CD8-positive, alpha-beta T cell (primary cell): ENCODE measurements at regions of chr16 and their contacts with region 1.

Region 1: GRCh38 chr16:30370444-30371247 is at the start of gene TBC1D10B:
- DNase-seq: peak; percentile 98 to 100 (median 99)
- ATAC-seq: peak; percentile 84
- H3K4me3 ChIP-seq: peak within 1 kb of the TSS; percentile 79 to 83
- H3K4me3 Mint-ChIP-seq: peak within 1 kb of the TSS; percentile 89
- H3K27ac ChIP-seq: peak within 1 kb of the TSS; percentile 36 to 84
- H3K27ac Mint-ChIP-seq: peak within 1 kb of the TSS; percentile 87
- H3K4me1 ChIP-seq: peaks cover 42% of the 10 kb centered on the region
- H3K4me1 Mint-ChIP-seq: peaks cover 54% of the 10 kb centered on the region
- H3K27me3 ChIP-seq: no peaks in the 10 kb centered on the region
- H3K27me3 Mint-ChIP-seq: no peaks in the 10 kb centered on the region
- CTCF ChIP-seq: no peak
- total RNA-seq, gene TBC1D10B: 12.3 to 13.8 TPM

Region 2: GRCh38 chr16:29862884-29863668 is 507.6 kb before region 1 on chr16 and contains the start of gene CDIPT:
- CTCF ChIA-PET with region 1: no interaction called
- POLR2A ChIA-PET with region 1: no interaction called
- intact Hi-C with region 1: no loop called
- DNase-seq: peak; percentile 87 to 98 (median 93)
- ATAC-seq: peak; percentile 97
- H3K4me3 ChIP-seq: peak within 1 kb of the TSS; percentile 81 to 96
- H3K4me3 Mint-ChIP-seq: peak within 1 kb of the TSS; percentile 94
- H3K27ac ChIP-seq: peak within 1 kb of the TSS; percentile 90 to 99
- H3K27ac Mint-ChIP-seq: peak within 1 kb of the TSS; percentile 100
- H3K4me1 ChIP-seq: peaks cover 19% of the 10 kb centered on the region
- H3K4me1 Mint-ChIP-seq: peaks cover 28% of the 10 kb centered on the region
- H3K27me3 ChIP-seq: no peaks in the 10 kb centered on the region
- H3K27me3 Mint-ChIP-seq: no peaks in the 10 kb centered on the region
- CTCF ChIP-seq: peak; percentile 42
- total RNA-seq, gene CDIPT: 24.5 to 26.4 TPM

Region 3: DNA sequence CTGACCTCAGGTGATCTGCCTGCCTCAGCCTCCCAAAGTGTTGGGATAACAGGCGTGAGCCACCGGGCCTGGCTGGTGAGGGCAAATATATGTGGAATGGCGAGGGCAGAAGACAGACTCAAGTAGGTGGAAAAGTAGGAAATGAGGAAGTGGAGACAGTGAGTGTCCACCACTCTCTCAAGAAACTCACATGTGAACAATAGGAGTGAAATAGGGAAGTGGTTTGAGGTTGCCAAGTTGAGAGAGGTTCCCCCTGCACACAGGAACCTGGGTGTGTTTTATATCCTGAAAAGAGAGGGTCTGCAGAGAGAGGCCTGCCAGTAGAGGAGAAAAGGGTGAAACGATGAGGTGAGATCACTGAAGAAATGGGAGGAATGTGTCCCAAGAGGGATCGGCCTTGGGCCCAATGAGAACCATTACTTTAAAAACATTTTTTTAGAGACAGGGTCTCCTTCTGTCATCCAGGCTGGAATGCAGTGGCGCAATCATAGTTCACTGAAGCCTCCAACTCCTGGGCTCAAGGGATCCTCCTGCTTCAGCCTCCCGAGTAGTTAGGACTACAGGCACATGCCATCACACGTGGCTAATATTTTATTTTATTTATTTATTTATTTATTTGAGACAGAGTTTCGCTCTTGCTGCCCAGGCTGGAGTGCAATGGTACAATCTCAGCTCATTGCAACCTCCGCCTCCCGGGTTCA is 204.3 kb before region 1 on chr16:
- CTCF ChIA-PET with region 1: no interaction called
- POLR2A ChIA-PET with region 1: no interaction called
- intact Hi-C with region 1: no loop called
- DNase-seq: peak in 3 of 9 experiments; percentile 25 to 59 (median 51)
- ATAC-seq: peak; percentile 48
- H3K4me3 ChIP-seq: no peak overlapping the region
- H3K4me3 Mint-ChIP-seq: peak overlapping the region; percentile 66
- H3K27ac ChIP-seq: peak overlapping the region in 1 of 2 experiments; percentile 49
- H3K27ac Mint-ChIP-seq: peak overlapping the region; percentile 74
- H3K4me1 ChIP-seq: peaks cover 30% of the 10 kb centered on the region
- H3K4me1 Mint-ChIP-seq: peaks cover 32% of the 10 kb centered on the region
- H3K27me3 ChIP-seq: no peaks in the 10 kb centered on the region
- H3K27me3 Mint-ChIP-seq: no peaks in the 10 kb centered on the region
- CTCF ChIP-seq: no peak

Region 4: GRCh38 chr16:30335598-30336474 is 34.8 kb before region 1 on chr16:
- CTCF ChIA-PET with region 1: no interaction called
- POLR2A ChIA-PET with region 1: interaction called, 8 read pairs
- intact Hi-C with region 1: loop called (anchors 1 kb)
- DNase-seq: peak in 4 of 9 experiments; percentile 32 to 72 (median 60)
- ATAC-seq: peak; percentile 2
- H3K4me3 ChIP-seq: peak overlapping the region; percentile 38 to 51
- H3K4me3 Mint-ChIP-seq: peak overlapping the region; percentile 86
- H3K27ac ChIP-seq: peak overlapping the region; percentile 50 to 52
- H3K27ac Mint-ChIP-seq: peak overlapping the region; percentile 86
- H3K4me1 ChIP-seq: peaks cover 10% of the 10 kb centered on the region
- H3K4me1 Mint-ChIP-seq: peaks cover 32% of the 10 kb centered on the region
- H3K27me3 ChIP-seq: no peaks in the 10 kb centered on the region
- H3K27me3 Mint-ChIP-seq: no peaks in the 10 kb centered on the region
- CTCF ChIP-seq: no peak

Region 5: DNA sequence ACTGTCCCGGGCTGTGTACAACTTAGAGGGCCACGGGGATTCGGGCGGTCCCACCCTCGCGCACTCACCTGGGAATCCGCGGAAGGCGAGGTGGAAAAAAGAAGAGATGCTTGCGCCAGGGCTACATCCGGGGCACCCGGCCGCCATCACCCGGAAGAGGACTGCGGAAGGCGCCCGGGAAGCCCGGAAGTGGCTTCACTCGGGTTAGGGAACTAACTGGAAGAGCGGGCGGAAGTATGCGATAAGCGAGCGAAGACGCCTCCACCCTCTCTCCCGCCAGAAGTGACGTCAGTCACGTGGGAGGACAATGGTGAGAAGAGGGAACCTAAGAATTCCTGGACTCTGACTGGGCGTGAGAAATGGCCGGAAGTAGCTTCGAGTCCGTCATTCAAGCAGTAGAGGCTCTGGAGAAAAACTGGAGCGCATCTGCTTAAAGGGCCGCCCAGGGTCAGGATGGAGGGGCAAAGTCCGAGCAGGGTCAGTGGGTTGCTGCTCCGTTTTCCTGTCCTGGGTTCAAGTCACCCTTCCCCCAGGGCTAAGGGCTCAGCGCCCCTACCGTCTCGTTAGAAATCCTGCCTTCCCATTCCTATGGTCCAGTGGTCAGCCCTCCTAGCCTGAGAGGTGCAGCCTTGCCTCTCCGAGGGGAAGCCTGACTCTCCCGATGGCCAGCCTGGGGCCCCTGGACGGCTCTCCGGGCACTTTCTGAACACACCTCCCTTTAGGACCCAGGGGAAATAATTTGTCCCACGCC is 15.3 kb before region 1 on chr16 and contains the start of gene CD2BP2:
- CTCF ChIA-PET with region 1: interaction called, 7 read pairs
- POLR2A ChIA-PET with region 1: interaction called, 4 read pairs
- intact Hi-C with region 1: loop called (anchors 1 kb)
- DNase-seq: peak; percentile 72 to 97 (median 86)
- ATAC-seq: peak; percentile 88
- H3K4me3 ChIP-seq: peak within 1 kb of the TSS; percentile 70 to 98
- H3K4me3 Mint-ChIP-seq: peak within 1 kb of the TSS; percentile 94
- H3K27ac ChIP-seq: peak within 1 kb of the TSS; percentile 63 to 98
- H3K27ac Mint-ChIP-seq: peak within 1 kb of the TSS; percentile 98
- H3K4me1 ChIP-seq: peaks cover 32% of the 10 kb centered on the region
- H3K4me1 Mint-ChIP-seq: peaks cover 27% of the 10 kb centered on the region
- H3K27me3 ChIP-seq: no peaks in the 10 kb centered on the region
- H3K27me3 Mint-ChIP-seq: no peaks in the 10 kb centered on the region
- CTCF ChIP-seq: no peak
- total RNA-seq, gene CD2BP2: 35.4 to 35.9 TPM

Region 6: DNA sequence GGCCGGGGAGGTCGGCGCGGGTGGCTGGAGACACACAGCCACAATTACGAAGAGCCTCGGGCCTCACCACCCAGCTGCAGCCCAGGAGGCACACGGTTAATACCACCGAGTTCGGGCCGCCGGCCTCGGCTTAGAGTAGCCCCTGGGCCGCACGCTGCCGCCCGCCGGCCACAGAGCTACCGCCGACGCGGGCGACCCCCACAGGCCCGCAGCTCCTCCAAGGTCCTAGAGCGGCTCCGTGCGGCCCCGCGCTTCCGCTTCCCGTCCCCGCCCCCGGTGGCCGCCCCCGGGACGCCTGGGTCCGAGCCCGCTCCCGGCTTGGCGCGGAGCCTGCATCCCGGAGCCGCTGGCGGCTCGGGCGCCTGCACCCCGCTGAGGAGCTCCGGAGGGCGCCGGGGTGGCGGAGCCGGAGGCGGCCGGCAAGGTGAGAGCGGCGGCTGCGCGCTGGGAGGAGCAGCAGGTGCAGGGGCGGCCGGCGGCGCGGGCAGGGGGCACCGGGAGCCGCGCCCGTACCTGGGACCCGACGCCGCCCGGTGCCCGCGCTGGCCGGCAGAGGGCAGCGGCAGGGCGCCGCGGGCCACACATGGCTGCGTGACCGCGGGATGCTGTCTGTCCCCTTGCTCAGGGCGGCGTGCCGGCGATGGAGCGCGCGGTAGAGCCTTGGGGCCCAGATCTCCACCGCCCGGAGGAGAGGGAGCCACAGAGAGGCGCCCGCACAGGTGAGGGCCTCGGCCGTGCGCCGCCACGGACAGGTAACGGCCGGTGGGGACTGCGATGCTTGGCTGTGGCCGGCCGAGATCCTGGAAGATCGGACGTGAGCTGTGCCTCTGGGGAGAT is 24.7 kb after region 1 on chr16 and contains the start of gene ZNF48:
- CTCF ChIA-PET with region 1: interaction called, 5 read pairs
- POLR2A ChIA-PET with region 1: interaction called, 10 read pairs
- intact Hi-C with region 1: loop called (anchors 1 kb)
- DNase-seq: peak in 8 of 9 experiments; percentile 46 to 81 (median 60)
- ATAC-seq: peak; percentile 68
- H3K4me3 ChIP-seq: peak within 1 kb of the TSS; percentile 69 to 77
- H3K4me3 Mint-ChIP-seq: peak within 1 kb of the TSS; percentile 81
- H3K27ac ChIP-seq: peak within 1 kb of the TSS; percentile 34 to 40
- H3K27ac Mint-ChIP-seq: peak within 1 kb of the TSS; percentile 69
- H3K4me1 ChIP-seq: peaks cover 50% of the 10 kb centered on the region
- H3K4me1 Mint-ChIP-seq: peaks cover 38% of the 10 kb centered on the region
- H3K27me3 ChIP-seq: no peaks in the 10 kb centered on the region
- H3K27me3 Mint-ChIP-seq: no peaks in the 10 kb centered on the region
- CTCF ChIP-seq: no peak
- total RNA-seq, gene ZNF48: 2.3 to 2.4 TPM

Region 7: DNA sequence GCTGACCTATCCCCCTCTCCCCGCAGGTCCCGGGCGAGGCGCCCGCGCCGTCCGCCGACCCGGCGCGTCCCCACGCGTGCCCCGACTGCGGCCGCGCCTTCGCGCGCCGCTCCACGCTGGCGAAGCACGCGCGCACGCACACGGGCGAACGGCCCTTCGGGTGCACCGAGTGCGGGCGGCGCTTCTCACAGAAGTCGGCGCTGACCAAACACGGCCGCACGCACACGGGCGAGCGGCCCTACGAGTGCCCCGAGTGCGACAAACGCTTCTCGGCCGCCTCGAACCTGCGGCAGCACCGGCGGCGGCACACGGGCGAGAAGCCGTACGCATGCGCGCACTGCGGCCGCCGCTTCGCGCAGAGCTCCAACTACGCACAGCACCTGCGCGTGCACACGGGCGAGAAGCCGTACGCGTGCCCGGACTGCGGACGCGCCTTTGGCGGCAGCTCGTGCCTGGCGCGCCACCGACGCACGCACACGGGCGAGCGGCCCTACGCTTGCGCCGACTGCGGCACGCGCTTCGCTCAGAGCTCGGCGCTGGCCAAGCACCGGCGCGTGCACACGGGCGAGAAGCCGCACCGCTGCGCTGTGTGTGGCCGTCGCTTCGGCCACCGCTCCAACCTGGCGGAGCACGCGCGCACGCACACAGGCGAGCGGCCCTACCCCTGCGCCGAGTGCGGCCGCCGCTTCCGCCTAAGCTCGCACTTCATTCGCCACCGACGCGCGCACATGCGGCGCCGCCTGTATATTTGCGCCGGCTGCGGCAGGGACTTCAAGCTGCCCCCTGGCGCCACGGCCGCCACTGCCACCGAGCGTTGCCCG is 47.1 kb after region 1 on chr16:
- CTCF ChIA-PET with region 1: interaction called, 5 read pairs
- POLR2A ChIA-PET with region 1: interaction called, 30 read pairs
- intact Hi-C with region 1: no loop called
- DNase-seq: peak; percentile 78 to 98 (median 88)
- ATAC-seq: peak; percentile 87
- H3K4me3 ChIP-seq: peak overlapping the region; percentile 52 to 72
- H3K4me3 Mint-ChIP-seq: peak overlapping the region; percentile 74
- H3K27ac ChIP-seq: peak overlapping the region; percentile 81 to 91
- H3K27ac Mint-ChIP-seq: peak overlapping the region; percentile 77
- H3K4me1 ChIP-seq: peaks cover 18% of the 10 kb centered on the region
- H3K4me1 Mint-ChIP-seq: peaks cover 7% of the 10 kb centered on the region
- H3K27me3 ChIP-seq: no peaks in the 10 kb centered on the region
- H3K27me3 Mint-ChIP-seq: no peaks in the 10 kb centered on the region
- CTCF ChIP-seq: no peak